Caco-2 (cell line): ENCODE measurements at regions of chr1 and their contacts with region 1.

Region 1: DNA sequence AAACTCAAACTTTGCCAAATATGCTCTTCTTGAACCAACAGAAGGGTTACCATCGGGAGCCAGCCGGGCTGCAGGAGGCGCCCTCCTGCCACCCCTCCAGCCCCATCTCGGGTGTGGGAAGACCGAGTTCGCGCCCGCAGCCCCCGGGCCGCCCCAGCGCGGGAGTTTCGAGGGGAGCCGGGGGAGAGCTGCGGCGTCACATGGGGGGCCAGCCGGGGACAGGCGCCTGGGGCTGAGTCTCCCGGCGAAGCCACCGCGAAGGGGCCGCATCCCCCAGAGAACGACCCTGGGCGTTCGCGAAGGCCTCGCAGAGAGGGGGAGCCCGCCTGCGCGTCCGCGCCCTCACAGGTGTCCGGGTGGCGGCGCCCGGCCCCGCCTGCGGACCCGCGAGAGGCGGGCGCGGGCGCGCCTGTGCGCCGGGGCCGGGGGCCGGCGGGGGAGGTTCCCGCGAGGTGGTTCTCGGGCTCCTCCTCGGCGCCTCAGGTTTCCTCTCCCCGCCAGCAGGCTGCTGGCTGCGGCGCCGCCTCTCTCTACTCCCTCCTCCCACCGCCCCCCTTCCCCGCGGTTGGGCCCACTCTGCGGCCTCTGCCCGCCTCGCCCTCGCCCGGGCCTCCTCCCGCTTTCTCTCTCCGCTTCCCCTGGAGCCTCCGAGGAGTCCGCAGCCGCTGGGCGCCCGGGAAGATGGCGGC is at the start of gene RAVER2:
- DNase-seq: peak; percentile 81
- H3K4me3 ChIP-seq: peak within 1 kb of the TSS; percentile 67
- H3K4me3 Mint-ChIP-seq: peak within 1 kb of the TSS; percentile 84
- H3K27ac Mint-ChIP-seq: peak within 1 kb of the TSS; percentile 86
- H3K4me1 ChIP-seq: no peaks in the 10 kb centered on the region
- H3K4me1 Mint-ChIP-seq: peaks cover 11% of the 10 kb centered on the region
- H3K27me3 ChIP-seq: no peaks in the 10 kb centered on the region
- H3K27me3 Mint-ChIP-seq: no peaks in the 10 kb centered on the region
- CTCF ChIP-seq: peak in 1 of 2 experiments; percentile 48
- total RNA-seq, gene RAVER2: 12.7 and 12.9 TPM in 2 replicates

Region 2: DNA sequence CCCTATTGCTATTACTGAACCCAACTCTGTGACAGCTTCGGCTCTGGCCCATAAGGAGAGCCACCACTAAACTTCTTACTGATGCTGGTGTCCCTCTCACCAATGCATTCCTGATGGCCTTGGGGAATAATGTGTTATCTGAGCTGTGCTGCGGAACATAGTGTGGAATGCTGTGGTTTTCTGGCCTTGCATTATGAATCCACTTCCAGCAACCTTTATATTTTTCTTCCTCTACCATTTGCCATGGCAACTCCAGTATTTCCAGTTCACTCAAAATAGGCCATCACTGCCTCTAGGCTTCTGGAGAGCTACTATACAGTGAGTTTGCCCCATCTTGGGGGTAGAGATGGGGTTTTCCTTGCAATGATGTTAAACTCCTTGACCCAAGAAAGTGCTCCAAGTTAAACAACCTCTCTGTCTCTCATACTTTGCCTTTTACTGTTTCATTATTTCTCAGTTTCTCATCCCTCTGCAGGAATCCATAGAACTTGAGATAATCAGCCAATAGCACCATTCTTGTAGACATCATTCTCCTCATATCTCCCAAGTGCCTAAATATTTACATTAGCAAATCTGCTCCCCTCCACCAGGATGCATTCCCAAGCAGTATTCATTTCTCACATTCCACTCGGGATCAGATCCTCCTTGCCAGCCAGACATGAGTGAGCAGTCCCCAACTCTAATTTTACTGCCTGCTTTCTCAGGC is 10.9 kb before region 1 on chr1:
- CTCF ChIA-PET with region 1: no interaction called
- POLR2A ChIA-PET with region 1: no interaction called
- intact Hi-C with region 1: loop called (anchors 1 kb)
- DNase-seq: peak in 1 of 2 experiments; percentile 3
- H3K4me3 ChIP-seq: no peak overlapping the region
- H3K4me3 Mint-ChIP-seq: no peak overlapping the region
- H3K27ac Mint-ChIP-seq: no peak overlapping the region
- H3K4me1 ChIP-seq: peaks cover 7% of the 10 kb centered on the region; the same call in 1 of the 2 replicates
- H3K4me1 Mint-ChIP-seq: peaks cover 14% of the 10 kb centered on the region
- H3K27me3 ChIP-seq: no peaks in the 10 kb centered on the region
- H3K27me3 Mint-ChIP-seq: no peaks in the 10 kb centered on the region
- CTCF ChIP-seq: no peak

Region 3: DNA sequence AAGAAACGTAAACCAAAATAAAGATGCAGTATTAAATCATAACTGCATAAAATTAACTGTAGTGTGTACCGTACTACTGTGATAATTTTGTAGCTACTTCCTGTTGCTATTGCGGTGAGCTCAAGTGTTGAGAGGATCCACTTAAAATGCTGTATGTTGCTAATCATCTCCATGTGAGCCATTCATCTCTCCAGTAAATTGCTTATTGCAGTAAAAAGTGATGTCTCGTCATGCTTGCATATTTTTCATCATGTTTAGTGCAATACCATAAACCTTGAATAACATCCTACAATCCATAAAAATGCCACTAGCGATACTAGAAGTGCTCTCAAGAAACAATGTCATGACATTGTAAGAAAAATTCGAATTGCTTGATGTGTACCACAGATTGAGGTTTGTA is 66.5 kb after region 1 on chr1:
- CTCF ChIA-PET with region 1: no interaction called
- POLR2A ChIA-PET with region 1: no interaction called
- intact Hi-C with region 1: no loop called
- DNase-seq: no peak
- H3K4me3 ChIP-seq: no peak overlapping the region
- H3K4me3 Mint-ChIP-seq: no peak overlapping the region
- H3K27ac Mint-ChIP-seq: no peak overlapping the region
- H3K4me1 ChIP-seq: no peaks in the 10 kb centered on the region
- H3K4me1 Mint-ChIP-seq: no peaks in the 10 kb centered on the region
- H3K27me3 ChIP-seq: no peaks in the 10 kb centered on the region
- H3K27me3 Mint-ChIP-seq: no peaks in the 10 kb centered on the region
- CTCF ChIP-seq: no peak

Region 4: DNA sequence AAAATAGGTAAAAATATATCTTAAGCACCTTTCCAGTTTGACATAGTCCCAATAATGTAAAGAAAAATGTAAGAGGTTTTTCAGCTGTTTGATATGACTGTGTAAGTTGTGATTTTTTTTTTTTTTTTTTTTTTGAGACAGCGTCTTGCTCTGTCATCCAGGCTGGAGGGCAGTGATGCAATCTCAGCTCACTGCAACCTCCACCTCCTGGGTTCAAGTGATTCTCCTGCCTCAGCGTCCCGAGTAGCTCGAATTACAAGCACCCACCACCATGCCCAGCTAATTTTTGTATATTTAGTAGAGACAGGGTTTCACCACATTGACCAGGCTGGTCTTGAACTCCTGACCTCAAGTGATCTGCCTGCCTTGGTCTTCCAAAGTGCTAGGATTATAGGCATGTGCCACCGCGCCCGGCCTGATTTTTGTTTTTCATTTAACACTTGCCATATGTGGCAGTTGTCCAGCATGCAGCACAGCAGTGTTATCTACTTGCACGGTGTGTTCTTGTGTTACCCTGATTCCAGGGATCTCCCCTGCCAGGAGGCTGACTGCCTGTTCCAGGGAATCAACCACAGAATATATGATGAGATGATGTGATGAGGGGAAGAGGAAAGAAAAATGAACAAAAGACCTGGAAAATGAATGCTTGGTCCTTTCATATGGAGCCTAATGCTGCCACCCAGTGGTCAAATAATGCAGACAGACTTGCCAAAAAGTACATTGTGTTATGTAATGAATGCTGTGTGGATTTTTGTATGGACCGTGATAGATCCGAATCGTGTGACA is 79.2 kb after region 1 on chr1:
- CTCF ChIA-PET with region 1: no interaction called
- POLR2A ChIA-PET with region 1: no interaction called
- intact Hi-C with region 1: loop called (anchors 1 kb)
- DNase-seq: peak; percentile 56 to 60
- H3K4me3 ChIP-seq: no peak overlapping the region
- H3K4me3 Mint-ChIP-seq: no peak overlapping the region
- H3K27ac Mint-ChIP-seq: no peak overlapping the region
- H3K4me1 ChIP-seq: no peaks in the 10 kb centered on the region
- H3K4me1 Mint-ChIP-seq: peaks cover 12% of the 10 kb centered on the region
- H3K27me3 ChIP-seq: no peaks in the 10 kb centered on the region
- H3K27me3 Mint-ChIP-seq: no peaks in the 10 kb centered on the region
- CTCF ChIP-seq: peak; percentile 41 to 60